ENCODE measurements at regions of chr17 and their contacts with region 1.

Region 1: GRCh38 chr17:58517734-58518609 is 3.5 kb upstream of the MTMR4 start:
- DNase-seq: peak; percentile 100
- ATAC-seq: peak; percentile 87
- H3K4me3 Mint-ChIP-seq: peak overlapping the region; percentile 96
- H3K27ac Mint-ChIP-seq: peak overlapping the region; percentile 95
- H3K4me1 Mint-ChIP-seq: peaks cover 32% of the 10 kb centered on the region
- H3K27me3 Mint-ChIP-seq: no peaks in the 10 kb centered on the region

Region 2: DNA sequence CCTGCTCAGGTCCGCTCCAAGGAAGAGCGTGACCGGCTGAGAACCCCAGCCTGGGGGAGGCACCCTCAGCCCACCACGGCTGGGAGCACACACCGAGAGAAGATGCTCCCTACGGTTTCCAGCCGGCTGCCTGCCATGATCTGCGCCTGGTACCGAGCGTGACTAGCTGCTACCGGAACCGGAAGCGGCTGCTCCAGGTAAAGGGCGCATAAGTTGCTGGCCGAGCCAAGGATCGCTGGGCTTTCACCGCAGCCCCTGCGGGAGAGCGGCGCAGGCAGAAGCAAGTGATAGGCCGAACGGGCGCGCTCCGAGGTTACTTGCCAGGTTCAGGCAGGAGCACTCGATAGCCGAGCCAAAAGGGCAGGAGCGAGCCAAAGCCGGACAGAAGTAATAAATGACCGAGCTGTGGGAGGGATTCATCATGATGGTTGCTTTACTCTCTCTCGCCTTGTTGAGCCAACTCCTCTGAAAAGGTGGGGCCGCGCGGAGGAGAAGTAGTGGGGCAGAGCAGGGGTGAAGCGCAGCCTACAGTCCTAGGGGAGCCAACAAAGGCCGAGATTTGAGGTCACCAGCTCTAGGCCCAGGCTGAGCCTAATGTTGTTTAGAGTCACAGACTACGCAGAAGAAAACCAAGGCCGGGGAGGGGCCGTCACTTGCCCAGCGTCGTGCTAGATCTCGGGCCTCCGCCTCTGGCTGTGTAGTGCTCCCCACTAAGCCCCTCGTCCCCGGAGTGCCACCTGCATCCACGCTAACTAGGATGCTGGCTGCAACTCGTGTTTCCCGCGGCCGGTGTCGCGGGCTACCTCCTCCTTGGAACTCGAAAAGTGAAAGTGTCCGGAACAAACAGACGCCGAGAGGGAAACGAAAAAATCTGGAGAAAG is 667.9 kb before region 1 on chr17 and contains the start of gene MRPS23:
- CTCF ChIA-PET with region 1: no interaction called
- POLR2A ChIA-PET with region 1: no interaction called
- intact Hi-C with region 1: loop called in 1 of 2 experiments (anchors 1 kb)
- DNase-seq: peak; percentile 99
- ATAC-seq: peak; percentile 91
- H3K4me3 Mint-ChIP-seq: peak within 1 kb of the TSS; percentile 98
- H3K27ac Mint-ChIP-seq: peak within 1 kb of the TSS; percentile 95
- H3K4me1 Mint-ChIP-seq: peaks cover 30% of the 10 kb centered on the region
- H3K27me3 Mint-ChIP-seq: no peaks in the 10 kb centered on the region
- total RNA-seq, gene MRPS23: 42.6 to 69.7 TPM

Region 3: GRCh38 chr17:58329035-58329809 is 188.8 kb before region 1 on chr17:
- CTCF ChIA-PET with region 1: no interaction called
- POLR2A ChIA-PET with region 1: no interaction called
- intact Hi-C with region 1: loop called (anchors 1 to 2 kb)
- DNase-seq: peak; percentile 93
- ATAC-seq: peak; percentile 43
- H3K4me3 Mint-ChIP-seq: peak overlapping the region; percentile 100
- H3K27ac Mint-ChIP-seq: peak overlapping the region; percentile 93
- H3K4me1 Mint-ChIP-seq: peaks cover 39% of the 10 kb centered on the region
- H3K27me3 Mint-ChIP-seq: peaks cover 2% of the 10 kb centered on the region

Region 4: DNA sequence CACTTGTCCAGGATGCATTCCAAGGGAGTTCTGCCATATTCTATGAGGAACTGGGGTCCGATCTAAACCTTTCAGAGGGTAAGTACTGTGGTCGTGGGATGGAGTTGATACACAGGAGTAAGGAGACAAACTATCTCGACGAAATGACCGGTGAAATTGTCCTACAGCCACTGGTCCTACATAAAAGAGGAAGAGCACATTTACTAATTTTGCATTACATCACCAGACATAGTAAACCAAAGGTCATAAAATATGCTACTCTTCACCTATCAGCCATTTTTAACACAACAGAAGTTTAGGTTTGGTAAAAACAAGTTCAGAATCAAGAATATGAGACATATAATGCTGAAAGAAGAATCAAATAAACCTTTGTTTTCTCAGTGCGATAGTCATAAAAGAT is 37.9 kb before region 1 on chr17:
- CTCF ChIA-PET with region 1: no interaction called
- POLR2A ChIA-PET with region 1: no interaction called
- intact Hi-C with region 1: no loop called
- DNase-seq: no peak
- ATAC-seq: no peak
- H3K4me3 Mint-ChIP-seq: no peak overlapping the region
- H3K27ac Mint-ChIP-seq: no peak overlapping the region
- H3K4me1 Mint-ChIP-seq: peaks cover 2% of the 10 kb centered on the region
- H3K27me3 Mint-ChIP-seq: no peaks in the 10 kb centered on the region

Region 5: DNA sequence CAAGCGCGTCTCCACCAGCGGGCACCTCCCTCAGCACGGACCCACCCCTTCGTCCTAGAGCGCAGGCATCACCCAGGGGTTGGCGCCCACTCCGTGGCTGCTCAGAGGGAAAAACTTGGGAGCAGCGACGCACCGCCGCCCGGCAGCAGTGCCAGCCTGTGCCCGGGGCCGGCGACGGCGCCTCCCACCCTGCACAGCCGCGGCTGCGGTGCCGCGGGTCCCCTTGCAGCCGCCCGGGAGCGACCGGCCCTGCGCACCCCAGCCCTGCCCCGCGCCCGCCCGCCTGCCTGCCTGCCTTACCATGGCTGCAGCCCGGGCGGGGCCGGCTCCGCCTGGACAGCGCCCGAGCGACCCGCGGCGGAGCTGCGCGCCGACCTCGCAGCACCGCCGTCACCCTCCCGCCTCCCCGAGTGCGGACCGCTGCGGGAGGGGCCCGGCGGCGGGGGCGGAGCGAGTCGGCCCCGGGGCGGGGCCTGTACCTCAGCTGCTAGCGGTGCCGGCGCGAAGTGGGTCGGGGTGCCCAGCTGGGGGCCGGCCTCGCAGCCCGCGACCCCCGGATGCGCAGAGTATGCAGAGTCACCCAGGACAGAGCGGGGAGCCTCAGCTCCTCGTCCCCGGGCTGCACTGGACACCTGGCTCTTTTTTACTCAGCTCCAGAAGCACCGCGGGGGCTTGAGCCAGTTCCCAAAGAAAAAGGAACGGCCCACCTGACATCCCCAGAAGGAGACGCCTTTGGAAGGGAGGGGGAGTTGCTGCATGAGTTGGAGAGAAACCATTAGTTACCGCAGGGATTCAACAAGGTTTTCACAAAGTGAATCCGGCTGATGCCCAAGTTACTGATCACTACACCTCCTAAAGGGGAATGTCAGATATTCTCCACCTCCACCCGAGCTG is 13.9 kb after region 1 on chr17:
- CTCF ChIA-PET with region 1: interaction called, 13 read pairs
- POLR2A ChIA-PET with region 1: interaction called, 7 read pairs
- intact Hi-C with region 1: no loop called
- DNase-seq: peak; percentile 70
- ATAC-seq: peak; percentile 92
- H3K4me3 Mint-ChIP-seq: peak overlapping the region; percentile 31
- H3K27ac Mint-ChIP-seq: no peak overlapping the region
- H3K4me1 Mint-ChIP-seq: no peaks in the 10 kb centered on the region
- H3K27me3 Mint-ChIP-seq: peaks cover 19% of the 10 kb centered on the region

Region 6: DNA sequence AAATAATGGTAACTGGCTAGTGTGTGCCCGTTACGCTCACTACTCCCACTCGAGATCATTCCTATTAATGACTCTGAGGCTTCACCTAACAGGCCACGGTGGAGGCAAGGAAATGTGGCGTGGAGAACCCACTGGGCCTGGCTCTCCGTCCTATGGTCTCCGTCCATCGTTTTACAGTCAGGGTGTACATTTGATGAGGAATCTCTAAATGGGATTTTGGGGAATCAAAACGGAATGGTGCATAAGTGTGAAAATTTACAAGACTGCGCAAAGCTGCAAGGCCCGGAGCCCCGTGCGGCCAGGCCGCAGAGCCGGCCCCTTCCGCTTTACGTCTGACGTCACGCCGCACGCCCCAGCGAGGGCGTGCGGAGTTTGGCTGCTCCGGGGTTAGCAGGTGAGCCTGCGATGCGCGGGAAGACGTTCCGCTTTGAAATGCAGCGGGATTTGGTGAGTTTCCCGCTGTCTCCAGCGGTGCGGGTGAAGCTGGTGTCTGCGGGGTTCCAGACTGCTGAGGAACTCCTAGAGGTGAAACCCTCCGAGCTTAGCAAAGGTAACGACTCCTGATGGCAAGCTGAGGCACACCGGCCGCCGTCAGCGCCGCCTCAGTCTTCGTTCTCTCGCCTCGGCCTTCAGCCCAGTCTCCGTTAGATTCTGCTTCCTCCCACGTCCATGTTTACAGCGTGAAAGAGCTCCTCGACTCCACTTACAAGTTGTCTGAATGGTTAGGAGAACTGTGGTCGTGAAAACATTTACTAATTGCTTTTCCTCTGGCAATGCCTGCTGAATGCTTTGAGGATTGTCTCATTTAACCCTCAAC is 174.5 kb after region 1 on chr17 and contains the start of gene RAD51C:
- CTCF ChIA-PET with region 1: interaction called, 8 read pairs
- POLR2A ChIA-PET with region 1: interaction called, 5 read pairs
- intact Hi-C with region 1: loop called (anchors 1 to 10 kb)
- DNase-seq: peak; percentile 94
- ATAC-seq: peak; percentile 96
- H3K4me3 Mint-ChIP-seq: peak within 1 kb of the TSS; percentile 92
- H3K27ac Mint-ChIP-seq: peak within 1 kb of the TSS; percentile 98
- H3K4me1 Mint-ChIP-seq: peaks cover 27% of the 10 kb centered on the region
- H3K27me3 Mint-ChIP-seq: no peaks in the 10 kb centered on the region
- total RNA-seq, gene RAD51C: 85.4 to 87.2 TPM

Region 7: GRCh38 chr17:58840847-58841592 is 323.0 kb after region 1 on chr17:
- CTCF ChIA-PET with region 1: no interaction called
- POLR2A ChIA-PET with region 1: no interaction called
- intact Hi-C with region 1: no loop called
- DNase-seq: no peak
- ATAC-seq: no peak
- H3K4me3 Mint-ChIP-seq: no peak overlapping the region
- H3K27ac Mint-ChIP-seq: no peak overlapping the region
- H3K4me1 Mint-ChIP-seq: no peaks in the 10 kb centered on the region
- H3K27me3 Mint-ChIP-seq: peaks cover 8% of the 10 kb centered on the region

Region 8: DNA sequence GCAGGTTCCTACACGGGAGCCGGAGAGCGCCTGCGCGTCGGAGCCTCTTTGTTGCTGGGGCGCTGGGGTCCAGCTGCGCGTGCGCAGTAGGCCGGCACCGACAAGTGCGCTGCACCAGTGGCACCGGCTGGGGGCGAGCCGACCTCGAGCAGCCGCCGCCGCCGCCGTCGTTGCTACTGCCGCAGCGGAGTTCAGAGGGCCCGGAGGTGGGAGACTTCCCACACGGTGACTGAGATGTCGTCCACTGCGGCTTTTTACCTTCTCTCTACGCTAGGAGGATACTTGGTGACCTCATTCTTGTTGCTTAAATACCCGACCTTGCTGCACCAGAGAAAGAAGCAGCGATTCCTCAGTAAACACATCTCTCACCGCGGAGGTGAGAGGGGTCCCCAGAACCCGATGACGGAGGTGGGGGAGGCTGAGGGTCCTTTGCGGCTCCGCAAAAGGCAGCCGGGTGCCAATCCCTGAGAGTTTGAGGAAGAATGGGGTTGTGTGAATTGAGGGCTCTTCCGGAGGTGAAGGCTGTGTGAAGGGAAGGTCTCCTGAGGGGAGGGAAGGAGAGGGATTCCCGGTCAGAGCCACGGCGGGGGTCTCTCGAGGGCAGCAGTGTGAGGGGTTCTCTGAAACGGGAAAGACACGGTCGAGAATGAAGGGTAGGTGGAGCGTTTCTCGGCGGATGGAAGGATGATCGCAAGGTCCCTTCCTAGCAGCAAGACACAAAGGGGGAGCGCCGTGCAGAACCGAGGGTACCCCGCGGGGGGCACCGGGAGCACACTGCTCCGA is 702.6 kb after region 1 on chr17 and contains the start of gene GDPD1:
- CTCF ChIA-PET with region 1: no interaction called
- POLR2A ChIA-PET with region 1: no interaction called
- intact Hi-C with region 1: loop called in 1 of 2 experiments (anchors 2 kb)
- DNase-seq: peak; percentile 99
- ATAC-seq: peak; percentile 99
- H3K4me3 Mint-ChIP-seq: peak within 1 kb of the TSS; percentile 93
- H3K27ac Mint-ChIP-seq: peak within 1 kb of the TSS; percentile 86
- H3K4me1 Mint-ChIP-seq: peaks cover 12% of the 10 kb centered on the region
- H3K27me3 Mint-ChIP-seq: no peaks in the 10 kb centered on the region
- total RNA-seq, gene GDPD1: 2.5 to 2.7 TPM